ENCODE measurements at regions of chr6 and their contacts with region 1.

Region 1: GRCh38 chr6:110537208-110538123 is 61.1 kb upstream of the SLC22A16 start:
- DNase-seq: no peak
- ATAC-seq: no peak
- H3K4me3 Mint-ChIP-seq: no peak overlapping the region
- H3K27ac Mint-ChIP-seq: peak overlapping the region; percentile 20
- H3K4me1 Mint-ChIP-seq: peaks cover 4% of the 10 kb centered on the region
- H3K27me3 Mint-ChIP-seq: no peaks in the 10 kb centered on the region
- CTCF ChIP-seq: no peak

Region 2: DNA sequence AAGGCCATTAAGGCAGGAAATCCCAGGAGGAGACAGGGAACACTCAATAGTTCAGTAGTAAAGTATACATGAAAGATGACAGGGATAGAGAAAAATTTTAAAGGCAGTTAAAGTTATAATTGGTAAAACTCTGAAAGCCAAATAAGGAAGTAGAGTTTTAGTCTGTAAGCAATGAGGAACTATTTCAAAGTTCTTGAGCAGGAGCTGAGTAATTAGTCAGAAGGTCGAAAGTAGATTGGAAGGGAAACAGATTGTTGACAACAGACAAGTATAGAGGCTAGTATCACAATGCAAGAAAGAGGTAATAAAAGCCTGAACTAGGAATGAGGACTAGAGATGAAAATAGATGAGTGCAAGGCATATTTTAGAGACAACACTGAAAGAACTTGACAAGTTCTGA is 127.5 kb after region 1 on chr6:
- CTCF ChIA-PET with region 1: no interaction called
- POLR2A ChIA-PET with region 1: no interaction called
- intact Hi-C with region 1: loop called (anchors 5 kb)
- DNase-seq: no peak
- ATAC-seq: peak; percentile 84
- H3K4me3 Mint-ChIP-seq: no peak overlapping the region
- H3K27ac Mint-ChIP-seq: peak overlapping the region; percentile 82
- H3K4me1 Mint-ChIP-seq: peaks cover 17% of the 10 kb centered on the region
- H3K27me3 Mint-ChIP-seq: no peaks in the 10 kb centered on the region
- CTCF ChIP-seq: no peak

Region 3: GRCh38 chr6:110703010-110703905 is 165.8 kb after region 1 on chr6:
- CTCF ChIA-PET with region 1: no interaction called
- POLR2A ChIA-PET with region 1: no interaction called
- intact Hi-C with region 1: no loop called
- DNase-seq: no peak
- ATAC-seq: no peak
- H3K4me3 Mint-ChIP-seq: no peak overlapping the region
- H3K27ac Mint-ChIP-seq: no peak overlapping the region
- H3K4me1 Mint-ChIP-seq: peaks cover 7% of the 10 kb centered on the region
- H3K27me3 Mint-ChIP-seq: no peaks in the 10 kb centered on the region
- CTCF ChIP-seq: no peak